ENCODE measurements at regions of chr5 and their contacts with region 1.

Region 1: DNA sequence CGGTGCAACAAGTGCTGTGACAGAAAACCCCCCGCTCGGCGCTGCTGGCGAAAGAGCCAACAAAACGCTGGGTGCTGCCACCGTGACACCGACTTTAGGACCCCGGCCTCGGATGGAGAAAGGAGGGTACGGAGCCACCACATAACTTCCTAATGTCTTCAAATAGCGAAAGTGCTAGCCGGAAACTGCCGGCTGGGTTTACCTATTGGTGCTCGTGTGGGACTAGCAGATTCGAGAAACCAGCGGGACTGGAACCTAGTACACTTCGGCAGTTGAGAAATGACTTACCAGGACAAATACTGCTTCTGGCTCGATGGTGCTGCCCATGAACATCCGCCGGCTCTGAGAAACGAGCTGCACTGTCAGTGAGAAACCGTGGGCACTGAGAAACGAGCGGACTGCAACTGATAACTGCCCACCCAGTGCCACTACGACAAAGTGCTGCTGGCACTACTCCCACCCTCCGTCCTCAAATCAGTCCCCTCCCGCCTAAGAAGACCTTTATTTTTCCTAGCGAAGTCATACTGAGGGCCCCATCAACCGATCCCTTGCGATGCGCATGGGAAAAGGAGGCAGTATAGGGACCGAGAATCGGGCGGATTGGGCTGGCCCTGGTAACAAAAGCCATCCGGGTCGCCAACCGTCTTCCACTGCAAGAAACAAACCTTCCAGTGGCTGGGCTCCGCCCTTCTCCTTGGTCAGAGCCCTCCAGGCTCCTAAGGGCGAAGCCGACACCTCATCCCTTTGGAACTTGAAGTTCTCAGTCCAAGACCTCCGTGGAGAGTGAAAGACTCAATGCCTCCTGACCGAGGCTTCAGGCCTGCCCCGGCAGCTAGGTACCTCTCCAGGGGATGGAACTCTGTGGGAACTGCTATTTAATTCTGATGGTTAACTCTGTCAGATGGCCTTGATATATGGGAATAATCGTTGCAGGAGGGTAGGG is 27.0 kb upstream of the ANXA2R start:
- DNase-seq: peak; percentile 96
- H3K4me3 Mint-ChIP-seq: peak overlapping the region; percentile 92
- H3K27ac Mint-ChIP-seq: peak overlapping the region; percentile 100
- H3K4me1 Mint-ChIP-seq: peaks cover 32% of the 10 kb centered on the region
- H3K27me3 Mint-ChIP-seq: no peaks in the 10 kb centered on the region

Region 2: GRCh38 chr5:42570966-42571960 is 495.8 kb before region 1 on chr5:
- intact Hi-C with region 1: no loop called
- DNase-seq: no peak
- H3K4me3 Mint-ChIP-seq: no peak overlapping the region
- H3K27ac Mint-ChIP-seq: no peak overlapping the region
- H3K4me1 Mint-ChIP-seq: no peaks in the 10 kb centered on the region
- H3K27me3 Mint-ChIP-seq: no peaks in the 10 kb centered on the region

Region 3: GRCh38 chr5:42645138-42645537 is 421.9 kb before region 1 on chr5:
- intact Hi-C with region 1: no loop called
- DNase-seq: no peak
- H3K4me3 Mint-ChIP-seq: no peak overlapping the region
- H3K27ac Mint-ChIP-seq: no peak overlapping the region
- H3K4me1 Mint-ChIP-seq: no peaks in the 10 kb centered on the region
- H3K27me3 Mint-ChIP-seq: peaks cover 4% of the 10 kb centered on the region

Region 4: DNA sequence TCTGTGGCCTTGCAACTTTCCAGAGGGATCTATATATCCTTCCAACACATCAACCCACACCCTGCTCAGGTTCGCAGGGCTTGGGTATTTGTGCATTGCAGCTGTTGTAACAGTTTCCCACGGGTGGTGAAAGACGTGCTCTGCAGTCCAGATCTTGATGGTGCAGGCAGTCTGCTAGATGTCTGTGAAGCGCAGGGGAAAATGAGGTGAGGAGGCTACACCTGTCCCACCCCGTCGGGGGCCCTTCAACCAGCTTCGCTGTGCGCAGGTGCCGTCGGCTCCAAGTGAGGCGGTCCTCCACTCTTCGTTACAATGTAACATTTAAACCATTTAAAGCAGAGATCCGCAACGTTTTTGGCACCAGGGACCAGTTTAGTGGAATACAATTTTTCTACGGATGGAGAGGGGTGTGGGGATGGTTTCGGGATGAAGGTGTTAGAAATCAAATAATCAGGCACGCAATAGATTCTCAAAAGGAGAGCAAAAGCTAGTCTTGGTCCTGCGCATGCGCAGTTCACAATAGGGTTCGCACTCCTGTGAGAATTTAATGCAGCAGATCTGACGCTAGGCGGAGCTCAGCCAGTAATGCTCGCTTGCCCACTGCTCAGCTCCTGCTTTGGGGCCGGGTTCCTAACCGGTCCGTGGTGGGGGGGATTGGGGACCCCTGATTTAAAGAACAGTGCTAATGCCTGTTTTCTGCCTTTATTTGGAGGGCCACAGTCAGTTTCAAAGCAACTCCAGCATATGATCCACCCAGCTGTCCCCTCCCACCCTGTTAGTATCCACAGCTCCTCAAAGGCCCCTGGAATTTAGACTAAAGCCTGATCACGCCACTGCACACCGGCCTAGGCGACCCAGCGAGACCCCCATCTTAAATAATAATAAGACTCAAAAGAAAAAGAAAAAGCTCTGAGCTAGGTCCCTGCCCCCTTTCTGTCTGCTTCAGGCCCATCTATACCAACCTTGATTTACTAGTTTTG is 158.3 kb before region 1 on chr5:
- intact Hi-C with region 1: loop called (anchors 2 kb)
- DNase-seq: peak; percentile 96
- H3K4me3 Mint-ChIP-seq: peak overlapping the region; percentile 83
- H3K27ac Mint-ChIP-seq: peak overlapping the region; percentile 1
- H3K4me1 Mint-ChIP-seq: peaks cover 6% of the 10 kb centered on the region
- H3K27me3 Mint-ChIP-seq: peaks cover 35% of the 10 kb centered on the region

Region 5: DNA sequence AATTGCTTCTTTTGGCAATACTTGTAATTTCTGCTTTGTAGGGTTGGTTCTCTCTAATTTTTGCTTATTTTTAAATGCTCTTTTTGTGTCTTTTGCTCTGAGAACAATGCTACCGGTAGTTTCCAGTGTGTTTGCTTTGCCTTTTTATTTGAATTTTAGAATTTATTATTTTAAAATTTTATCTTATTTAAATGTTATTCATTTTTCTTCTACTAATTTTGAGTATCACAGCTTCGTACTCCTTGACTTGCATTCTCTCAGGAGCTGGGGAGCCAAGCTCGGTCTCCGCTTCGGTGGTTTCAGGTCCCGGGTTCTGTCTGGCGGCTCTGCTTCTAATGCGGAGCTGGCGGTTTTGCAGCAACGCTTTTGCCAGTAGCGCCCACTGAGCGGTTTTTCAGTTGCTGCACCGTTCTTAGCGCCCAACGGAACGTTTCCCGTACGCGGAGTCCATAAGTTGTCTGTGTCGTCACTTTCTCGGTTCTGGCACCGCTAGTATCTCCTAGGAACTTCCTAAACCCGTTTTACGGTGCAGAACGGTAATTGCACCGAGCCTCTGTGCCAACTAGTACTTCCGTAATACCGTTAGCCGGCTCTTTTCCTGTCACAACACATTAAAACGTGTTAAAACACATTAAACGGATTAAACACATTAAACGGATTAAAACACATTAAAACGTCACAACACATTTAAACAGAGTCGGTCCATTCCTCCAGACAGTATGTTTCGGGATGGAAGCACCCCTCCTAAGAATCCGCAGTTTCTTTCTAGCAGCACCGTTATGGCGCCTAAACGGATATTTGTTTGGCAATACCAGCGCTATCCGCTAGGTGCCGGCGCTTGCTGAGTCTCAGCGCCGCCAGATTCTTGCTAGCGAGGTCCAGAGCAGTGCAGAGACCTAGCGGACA is 72.6 kb before region 1 on chr5:
- intact Hi-C with region 1: loop called (anchors 1 kb)
- DNase-seq: peak; percentile 97
- H3K4me3 Mint-ChIP-seq: peak overlapping the region; percentile 96
- H3K27ac Mint-ChIP-seq: peak overlapping the region; percentile 100
- H3K4me1 Mint-ChIP-seq: peaks cover 40% of the 10 kb centered on the region
- H3K27me3 Mint-ChIP-seq: no peaks in the 10 kb centered on the region

Region 6: GRCh38 chr5:43019614-43020293 is 47.3 kb before region 1 on chr5:
- intact Hi-C with region 1: loop called (anchors 1 kb)
- DNase-seq: peak; percentile 95
- H3K4me3 Mint-ChIP-seq: peak overlapping the region; percentile 97
- H3K27ac Mint-ChIP-seq: peak overlapping the region; percentile 100
- H3K4me1 Mint-ChIP-seq: peaks cover 45% of the 10 kb centered on the region
- H3K27me3 Mint-ChIP-seq: no peaks in the 10 kb centered on the region

Region 7: DNA sequence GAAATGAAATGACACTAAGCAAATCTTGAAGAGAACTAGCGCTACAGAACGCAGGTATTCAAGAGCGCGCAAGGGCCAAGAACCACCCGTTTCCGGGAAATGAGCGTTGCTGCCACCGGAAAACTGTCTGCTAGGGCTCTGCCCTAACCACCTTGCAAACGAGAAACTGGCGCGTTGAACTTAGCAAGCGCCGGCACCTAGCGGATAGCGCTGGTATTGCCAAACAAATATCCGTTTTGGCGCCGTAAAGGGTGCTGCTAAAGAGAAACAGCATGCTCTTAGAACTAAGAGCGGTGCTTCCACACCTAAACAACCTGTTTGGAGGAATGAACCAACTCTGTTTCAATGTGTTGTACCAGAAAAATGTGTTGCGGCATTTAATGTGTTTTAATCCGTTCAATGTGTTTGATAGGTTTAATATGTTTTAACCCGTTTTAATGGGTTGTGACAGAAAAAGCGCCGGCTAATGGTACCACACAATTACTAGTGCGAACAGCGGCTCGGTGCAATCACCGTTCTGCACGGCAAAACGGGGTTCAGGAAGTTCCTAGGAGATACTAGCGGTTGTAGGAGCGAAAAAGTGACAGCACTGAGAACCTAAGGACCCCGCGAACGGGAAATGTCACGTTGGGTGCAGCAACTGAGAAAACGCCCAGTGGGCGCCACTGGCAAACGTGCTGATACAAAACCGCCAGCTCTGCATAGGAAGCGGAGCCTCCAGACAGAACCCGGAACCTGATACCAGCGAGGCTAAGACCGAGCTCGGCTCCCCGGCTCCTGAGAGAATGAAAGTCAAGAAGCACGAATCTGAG is 26.6 kb before region 1 on chr5 and contains the start of gene ANXA2R:
- intact Hi-C with region 1: loop called (anchors 1 kb)
- DNase-seq: peak; percentile 98
- H3K4me3 Mint-ChIP-seq: peak within 1 kb of the TSS; percentile 94
- H3K27ac Mint-ChIP-seq: peak within 1 kb of the TSS; percentile 96
- H3K4me1 Mint-ChIP-seq: peaks cover 46% of the 10 kb centered on the region
- H3K27me3 Mint-ChIP-seq: no peaks in the 10 kb centered on the region
- total RNA-seq, gene ANXA2R: 1.1 and 1.2 TPM in 2 replicates

Region 8: GRCh38 chr5:43191740-43192557 is 124.9 kb after region 1 on chr5 and contains the start of gene NIM1K:
- intact Hi-C with region 1: loop called (anchors 1 kb)
- DNase-seq: peak; percentile 85
- H3K4me3 Mint-ChIP-seq: peak within 1 kb of the TSS; percentile 86
- H3K27ac Mint-ChIP-seq: peak within 1 kb of the TSS; percentile 86
- H3K4me1 Mint-ChIP-seq: peaks cover 31% of the 10 kb centered on the region
- H3K27me3 Mint-ChIP-seq: peaks cover 15% of the 10 kb centered on the region
- total RNA-seq, gene NIM1K: 0.82 and 0.97 TPM in 2 replicates

Region 9: GRCh38 chr5:43556857-43557542 is 489.9 kb after region 1 on chr5 and contains the start of gene PAIP1:
- intact Hi-C with region 1: loop called (anchors 2 kb)
- DNase-seq: peak; percentile 96
- H3K4me3 Mint-ChIP-seq: peak within 1 kb of the TSS; percentile 91
- H3K27ac Mint-ChIP-seq: peak within 1 kb of the TSS; percentile 90
- H3K4me1 Mint-ChIP-seq: peaks cover 12% of the 10 kb centered on the region
- H3K27me3 Mint-ChIP-seq: peaks cover 13% of the 10 kb centered on the region
- total RNA-seq, gene PAIP1: 60.2 and 64.1 TPM in 2 replicates

Measured in activated CD4-positive, alpha-beta T cell treated with anti-CD3 and anti-CD28 coated beads, Interleukin-2, amount 10 ng/mL, durations not matched to agents 24 days and 14 days (primary cell).